Right lobe of liver (tissue), 6 donors: ENCODE measurements at regions of chr12 and their contacts with region 1.

Region 1: GRCh38 chr12:7638760-7639555 is 26.8 kb downstream of the APOBEC1 start:
- DNase-seq: peak; percentile 60 to 74 (median 66)
- ATAC-seq: peak; percentile 97 to 99 (median 98)
- H3K4me3 ChIP-seq: peak overlapping the region in 1 of 3 donors; percentile 3
- H3K27ac ChIP-seq: no peak overlapping the region
- H3K4me1 ChIP-seq: no peaks in the 10 kb centered on the region
- H3K27me3 ChIP-seq: no peaks in the 10 kb centered on the region
- CTCF ChIP-seq: peak; percentile 89 to 97 (median 92)
- POLR2A ChIP-seq: no peak

Region 2: DNA sequence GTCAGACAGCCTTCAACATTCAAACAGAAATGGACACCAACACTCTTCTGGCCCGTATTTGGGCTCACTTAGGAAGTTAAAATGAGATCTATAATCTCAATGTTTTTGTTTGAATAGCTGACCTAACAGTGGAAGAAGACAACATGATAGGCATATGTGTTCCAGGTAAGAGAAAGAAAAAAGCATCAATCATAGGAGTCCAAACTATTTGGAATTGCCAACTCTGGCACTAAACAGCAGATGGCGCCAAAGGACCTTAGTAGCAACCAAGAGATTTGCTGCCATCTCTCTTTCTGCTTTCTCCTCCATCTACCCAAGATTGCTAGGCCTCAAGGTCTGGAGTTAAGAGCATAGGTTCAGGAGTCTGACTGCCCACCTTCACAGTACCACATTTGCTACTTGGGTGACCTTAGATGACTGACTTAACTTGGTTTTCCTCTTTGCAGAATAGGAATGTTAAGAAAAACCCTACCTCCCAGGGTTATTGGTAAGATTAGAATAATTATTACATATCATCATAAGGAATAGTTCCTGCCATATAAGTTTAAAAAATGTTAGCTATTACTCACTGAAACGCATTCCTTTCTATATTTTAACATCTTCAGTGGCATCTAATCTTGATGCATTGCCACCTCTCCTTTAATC is 419.2 kb before region 1 on chr12:
- intact Hi-C with region 1: loop called in 1 of 2 experiments (anchors 10 kb)
- DNase-seq: peak in 2 of 3 donors; percentile 50 to 73
- ATAC-seq: peak; percentile 87 to 94 (median 91)
- H3K4me3 ChIP-seq: no peak overlapping the region
- H3K27ac ChIP-seq: no peak overlapping the region
- H3K4me1 ChIP-seq: no peaks in the 10 kb centered on the region
- H3K27me3 ChIP-seq: no peaks in the 10 kb centered on the region
- CTCF ChIP-seq: peak; percentile 88 to 92 (median 90)
- POLR2A ChIP-seq: no peak

Region 3: DNA sequence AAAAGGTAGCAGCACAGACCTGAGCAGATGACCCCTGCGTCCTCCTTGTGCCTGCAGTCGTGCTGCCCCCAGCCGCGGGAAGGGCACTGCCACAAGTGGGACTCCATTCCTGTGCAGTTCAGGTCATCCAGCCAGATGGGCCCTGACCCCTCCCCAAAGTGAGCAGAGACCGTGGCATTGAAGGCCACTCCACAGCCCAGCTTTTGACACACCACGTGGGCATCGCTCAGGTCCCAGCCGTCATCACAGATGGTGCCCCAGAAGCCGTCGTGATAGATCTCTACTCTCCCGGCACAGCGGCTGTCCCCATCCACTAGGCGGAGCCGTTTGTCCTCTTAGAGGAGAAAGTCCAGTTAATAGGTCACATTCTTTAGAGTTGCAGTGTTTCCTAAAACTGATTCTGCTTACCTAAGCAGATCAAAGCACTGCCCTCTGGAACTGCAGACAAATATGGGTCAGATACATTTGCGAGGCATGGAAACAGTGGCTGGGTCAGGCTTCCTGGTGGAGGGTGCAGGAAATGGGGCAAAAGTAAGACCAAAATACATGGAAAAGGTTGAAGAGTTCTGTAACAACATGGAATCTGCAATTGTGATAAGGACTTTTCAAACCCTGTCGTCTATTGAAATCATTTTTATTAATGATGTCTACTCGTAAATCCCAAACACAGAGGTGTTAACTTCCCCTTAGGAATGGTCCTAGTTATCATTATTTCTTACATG is 264.4 kb before region 1 on chr12:
- intact Hi-C with region 1: loop called in 1 of 2 experiments (anchors 5 kb)
- DNase-seq: peak; percentile 72 to 81 (median 77)
- ATAC-seq: peak; percentile 99 to 100 (median 99)
- H3K4me3 ChIP-seq: no peak overlapping the region
- H3K27ac ChIP-seq: no peak overlapping the region
- H3K4me1 ChIP-seq: peaks cover 0 to 7% (median 2%) of the 10 kb centered on the region in 4 donors
- H3K27me3 ChIP-seq: no peaks in the 10 kb centered on the region
- CTCF ChIP-seq: peak; percentile 59 to 79 (median 70)
- POLR2A ChIP-seq: no peak

Region 4: GRCh38 chr12:7542813-7543498 is 96.0 kb before region 1 on chr12:
- intact Hi-C with region 1: no loop called
- DNase-seq: no peak
- ATAC-seq: peak; percentile 30 to 71 (median 50)
- H3K4me3 ChIP-seq: no peak overlapping the region
- H3K27ac ChIP-seq: no peak overlapping the region
- H3K4me1 ChIP-seq: no peaks in the 10 kb centered on the region
- H3K27me3 ChIP-seq: no peaks in the 10 kb centered on the region
- CTCF ChIP-seq: no peak
- POLR2A ChIP-seq: no peak

Region 5: GRCh38 chr12:7583571-7583970 is 55.4 kb before region 1 on chr12:
- intact Hi-C with region 1: no loop called
- DNase-seq: no peak
- ATAC-seq: peak in 1 of 4 donors; percentile 11
- H3K4me3 ChIP-seq: no peak overlapping the region
- H3K27ac ChIP-seq: no peak overlapping the region
- H3K4me1 ChIP-seq: no peaks in the 10 kb centered on the region
- H3K27me3 ChIP-seq: no peaks in the 10 kb centered on the region
- CTCF ChIP-seq: no peak
- POLR2A ChIP-seq: no peak

Region 6: DNA sequence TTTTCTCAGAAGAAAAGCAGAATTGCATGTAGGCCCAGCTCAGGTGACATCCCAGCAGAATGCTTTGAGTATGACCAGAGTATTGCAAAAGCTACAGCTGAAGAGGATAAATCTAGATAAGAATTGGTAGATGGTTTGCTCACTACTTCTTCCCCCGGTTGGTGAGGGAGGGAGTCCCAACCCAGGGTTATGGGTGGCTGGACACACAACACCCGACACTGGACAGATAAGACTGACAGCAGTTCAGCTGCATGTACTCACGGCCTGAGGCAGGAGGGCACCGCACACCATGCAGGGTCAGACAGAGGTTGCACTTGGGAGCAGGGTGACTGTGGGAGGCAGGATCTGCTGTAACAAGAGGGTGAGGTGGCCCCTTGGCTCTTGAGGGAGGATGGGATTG is 109.9 kb after region 1 on chr12:
- intact Hi-C with region 1: no loop called
- DNase-seq: no peak
- ATAC-seq: no peak
- H3K4me3 ChIP-seq: no peak overlapping the region
- H3K27ac ChIP-seq: no peak overlapping the region
- H3K4me1 ChIP-seq: no peaks in the 10 kb centered on the region
- H3K27me3 ChIP-seq: no peaks in the 10 kb centered on the region
- CTCF ChIP-seq: no peak
- POLR2A ChIP-seq: no peak